Natural killer cell (primary cell): ENCODE measurements at regions of chr4 and their contacts with region 1.

Region 1: DNA sequence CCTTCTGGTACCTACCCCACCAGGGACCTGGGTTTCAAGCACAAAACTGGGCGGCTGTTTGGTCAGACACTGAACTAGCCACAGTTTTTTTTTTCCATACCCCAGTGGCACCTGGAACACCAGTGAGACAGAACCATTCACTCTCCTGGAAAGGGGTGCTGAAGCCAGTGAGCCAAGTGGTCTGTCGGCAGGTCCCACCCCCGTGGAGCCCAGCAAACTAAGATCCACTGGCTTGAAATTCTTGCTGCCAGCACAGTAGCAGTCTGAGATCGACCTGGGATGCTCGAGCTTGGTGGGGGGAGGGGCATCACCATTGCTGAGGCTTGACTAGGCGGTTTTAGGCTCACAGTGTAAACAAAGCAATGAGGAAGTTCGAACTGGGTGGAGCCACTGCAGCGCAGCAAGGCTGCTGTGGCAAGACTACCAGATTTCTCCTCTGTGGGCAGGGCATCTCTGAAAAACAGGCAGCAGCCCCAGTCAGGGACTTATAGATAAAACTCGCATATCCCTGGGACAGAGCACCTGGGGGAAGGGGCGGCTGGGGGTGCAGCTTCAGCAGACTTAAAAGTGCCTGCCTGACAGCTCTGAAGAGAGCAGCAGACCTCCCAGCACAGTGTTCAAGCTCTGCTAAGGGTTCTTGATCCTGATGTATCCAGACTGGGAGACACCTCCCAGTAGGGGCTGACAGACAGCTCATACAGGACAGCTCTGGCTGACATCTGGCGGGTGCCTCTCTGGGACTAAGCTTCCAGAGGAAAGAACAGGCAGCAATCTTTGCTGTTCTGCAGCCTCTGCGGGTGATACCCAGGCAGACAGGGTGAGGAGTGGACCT is 223.0 kb downstream of the COX18 start:
- DNase-seq: no peak
- ATAC-seq: no peak
- H3K4me3 ChIP-seq: no peak overlapping the region
- H3K4me3 Mint-ChIP-seq: no peak overlapping the region
- H3K27ac ChIP-seq: no peak overlapping the region
- H3K27ac Mint-ChIP-seq: no peak overlapping the region
- H3K4me1 ChIP-seq: no peaks in the 10 kb centered on the region
- H3K4me1 Mint-ChIP-seq: no peaks in the 10 kb centered on the region
- H3K27me3 ChIP-seq: no peaks in the 10 kb centered on the region
- H3K27me3 Mint-ChIP-seq: no peaks in the 10 kb centered on the region
- CTCF ChIP-seq: no peak

Region 2: DNA sequence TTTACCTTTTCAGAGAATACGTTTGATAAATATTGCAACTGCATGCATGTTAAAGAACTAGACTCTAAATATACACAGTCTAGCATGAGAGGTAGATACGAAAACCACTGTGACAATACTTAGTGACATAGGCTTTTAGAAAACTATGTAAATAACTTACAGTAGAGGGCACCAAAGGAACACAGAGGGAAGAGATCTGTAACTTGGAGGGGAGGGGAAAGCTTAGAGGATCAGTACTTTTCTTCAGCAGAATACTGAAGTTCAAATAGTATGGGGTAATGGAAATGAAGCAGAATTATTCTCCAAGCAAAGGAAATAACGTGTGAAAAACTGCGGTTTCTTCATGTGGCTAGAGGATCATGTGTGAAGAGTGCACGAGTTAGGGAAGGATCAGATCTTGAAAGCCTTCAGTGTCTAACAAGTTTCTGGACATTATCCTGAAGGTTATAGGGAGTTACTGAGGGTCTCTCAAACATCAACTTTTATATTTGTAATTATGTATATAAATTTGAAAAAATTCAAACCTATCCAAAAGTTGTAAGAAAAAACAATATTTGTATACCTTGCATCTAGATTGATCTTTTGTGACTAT is 550.4 kb before region 1 on chr4:
- intact Hi-C with region 1: no loop called
- DNase-seq: peak in 1 of 2 donors; percentile 15
- ATAC-seq: peak in 2 of 3 donors; percentile 38 to 44
- H3K4me3 ChIP-seq: no peak overlapping the region
- H3K4me3 Mint-ChIP-seq: no peak overlapping the region
- H3K27ac ChIP-seq: no peak overlapping the region
- H3K27ac Mint-ChIP-seq: no peak overlapping the region
- H3K4me1 ChIP-seq: no peaks in the 10 kb centered on the region
- H3K4me1 Mint-ChIP-seq: peaks cover 5 to 6% of the 10 kb centered on the region in 2 donors
- H3K27me3 ChIP-seq: no peaks in the 10 kb centered on the region
- H3K27me3 Mint-ChIP-seq: peaks cover 0 to 12% of the 10 kb centered on the region in 2 donors
- CTCF ChIP-seq: no peak

Region 3: GRCh38 chr4:72484981-72485380 is 361.5 kb before region 1 on chr4:
- intact Hi-C with region 1: no loop called
- DNase-seq: no peak
- ATAC-seq: no peak
- H3K4me3 ChIP-seq: no peak overlapping the region
- H3K4me3 Mint-ChIP-seq: no peak overlapping the region
- H3K27ac ChIP-seq: no peak overlapping the region
- H3K27ac Mint-ChIP-seq: no peak overlapping the region
- H3K4me1 ChIP-seq: no peaks in the 10 kb centered on the region
- H3K4me1 Mint-ChIP-seq: no peaks in the 10 kb centered on the region
- H3K27me3 ChIP-seq: no peaks in the 10 kb centered on the region
- H3K27me3 Mint-ChIP-seq: no peaks in the 10 kb centered on the region
- CTCF ChIP-seq: no peak

Region 4: DNA sequence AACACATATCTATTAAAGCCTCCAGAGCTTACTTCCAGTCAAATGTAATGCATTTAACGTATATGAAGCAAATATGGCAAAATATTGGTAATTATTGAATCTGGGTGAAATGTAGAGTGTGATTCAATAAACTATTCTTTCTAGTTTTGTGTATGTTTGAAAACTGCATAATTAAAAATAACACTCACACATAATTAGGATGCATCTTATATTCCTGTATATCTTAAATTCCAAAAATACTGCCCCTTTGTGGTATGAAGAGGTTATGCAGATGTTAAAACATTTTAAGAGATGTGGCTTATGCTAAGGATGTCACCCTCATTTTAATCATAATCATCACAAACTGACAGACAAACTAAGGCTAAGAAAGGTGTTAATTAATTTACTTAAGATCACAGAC is 40.1 kb after region 1 on chr4:
- intact Hi-C with region 1: loop called (anchors 2 kb)
- DNase-seq: no peak
- ATAC-seq: no peak
- H3K4me3 ChIP-seq: no peak overlapping the region
- H3K4me3 Mint-ChIP-seq: no peak overlapping the region
- H3K27ac ChIP-seq: no peak overlapping the region
- H3K27ac Mint-ChIP-seq: no peak overlapping the region
- H3K4me1 ChIP-seq: no peaks in the 10 kb centered on the region
- H3K4me1 Mint-ChIP-seq: no peaks in the 10 kb centered on the region
- H3K27me3 ChIP-seq: no peaks in the 10 kb centered on the region
- H3K27me3 Mint-ChIP-seq: no peaks in the 10 kb centered on the region
- CTCF ChIP-seq: no peak